Natural killer cell (primary cell): ENCODE measurements at regions of chr14 and their contacts with region 1.

Region 1: DNA sequence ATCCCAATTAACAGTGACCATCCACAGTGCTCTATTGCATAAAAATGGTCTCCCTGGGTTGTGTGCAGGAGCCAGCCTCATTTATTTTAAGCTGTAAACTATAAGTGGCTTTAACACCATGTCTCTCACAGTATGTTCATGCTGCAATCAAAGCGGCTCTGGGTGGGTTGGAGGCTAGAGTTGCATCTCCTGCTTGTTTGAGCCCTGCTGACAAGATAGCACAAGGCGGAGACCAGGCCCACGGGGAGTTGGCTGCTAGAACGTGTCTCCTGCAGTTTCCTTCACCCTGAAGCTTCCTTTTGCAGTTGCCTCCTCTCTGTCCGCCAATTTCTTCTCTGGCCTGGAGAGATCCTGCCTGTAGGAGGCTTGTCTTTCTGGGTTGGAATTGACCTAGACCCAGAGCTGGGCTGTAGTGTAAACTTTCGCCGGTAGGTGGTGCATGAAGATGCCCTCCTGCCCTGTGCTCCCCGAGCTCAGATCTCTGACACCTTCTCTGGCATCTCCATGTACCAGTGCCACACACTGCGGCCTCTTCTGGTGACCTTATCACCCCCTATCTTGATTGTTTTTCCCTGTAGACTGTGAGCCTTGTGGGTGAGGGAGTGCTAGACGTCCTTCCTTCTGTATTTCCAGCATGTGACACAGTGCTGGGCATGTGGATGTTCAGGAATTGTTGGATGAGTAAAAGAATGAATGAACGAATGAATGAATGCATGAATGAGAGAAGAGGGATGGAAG is 10.3 kb downstream of the OTUB2 start:
- DNase-seq: peak; percentile 71 to 88
- ATAC-seq: peak; percentile 88 to 100 (median 96)
- H3K4me3 ChIP-seq: no peak overlapping the region
- H3K4me3 Mint-ChIP-seq: no peak overlapping the region
- H3K27ac ChIP-seq: no peak overlapping the region
- H3K27ac Mint-ChIP-seq: no peak overlapping the region
- H3K4me1 ChIP-seq: no peaks in the 10 kb centered on the region
- H3K4me1 Mint-ChIP-seq: peaks cover 5% of the 10 kb centered on the region in 2 donors
- H3K27me3 ChIP-seq: no peaks in the 10 kb centered on the region
- H3K27me3 Mint-ChIP-seq: peaks cover 4 to 6% of the 10 kb centered on the region in 2 donors
- CTCF ChIP-seq: peak; percentile 74

Region 2: GRCh38 chr14:94136575-94137331 is 100.3 kb after region 1 on chr14:
- intact Hi-C with region 1: loop called (anchors 1 kb)
- DNase-seq: peak; percentile 83 to 90
- ATAC-seq: peak; percentile 90 to 95 (median 95)
- H3K4me3 ChIP-seq: no peak overlapping the region
- H3K4me3 Mint-ChIP-seq: no peak overlapping the region
- H3K27ac ChIP-seq: no peak overlapping the region
- H3K27ac Mint-ChIP-seq: no peak overlapping the region
- H3K4me1 ChIP-seq: no peaks in the 10 kb centered on the region
- H3K4me1 Mint-ChIP-seq: no peaks in the 10 kb centered on the region
- H3K27me3 ChIP-seq: peaks cover 8% of the 10 kb centered on the region
- H3K27me3 Mint-ChIP-seq: peaks cover 20 to 31% of the 10 kb centered on the region in 2 donors
- CTCF ChIP-seq: peak; percentile 94

Region 3: GRCh38 chr14:94180655-94181271 is 144.3 kb after region 1 on chr14:
- intact Hi-C with region 1: loop called (anchors 1 kb)
- DNase-seq: peak in 1 of 2 donors; percentile 75
- ATAC-seq: peak; percentile 82 to 87 (median 83)
- H3K4me3 ChIP-seq: no peak overlapping the region
- H3K4me3 Mint-ChIP-seq: peak overlapping the region; percentile 2
- H3K27ac ChIP-seq: no peak overlapping the region
- H3K27ac Mint-ChIP-seq: peak overlapping the region in 1 of 2 donors; percentile 13
- H3K4me1 ChIP-seq: no peaks in the 10 kb centered on the region
- H3K4me1 Mint-ChIP-seq: peaks cover 4 to 9% of the 10 kb centered on the region in 2 donors
- H3K27me3 ChIP-seq: peaks cover 35% of the 10 kb centered on the region
- H3K27me3 Mint-ChIP-seq: peaks cover 39 to 74% of the 10 kb centered on the region in 2 donors
- CTCF ChIP-seq: peak; percentile 75